PC-9 (cell line): ENCODE measurements at regions of chr20 and their contacts with region 1.

Region 1: GRCh38 chr20:8853805-8854338 is 215.0 kb upstream of the PLCB4 start:
- DNase-seq: peak; percentile 24 to 39
- H3K4me3 ChIP-seq: no peak overlapping the region
- H3K27ac ChIP-seq: no peak overlapping the region
- H3K4me1 ChIP-seq: no peaks in the 10 kb centered on the region
- H3K27me3 ChIP-seq: no peaks in the 10 kb centered on the region
- CTCF ChIP-seq: peak; percentile 92

Region 2: DNA sequence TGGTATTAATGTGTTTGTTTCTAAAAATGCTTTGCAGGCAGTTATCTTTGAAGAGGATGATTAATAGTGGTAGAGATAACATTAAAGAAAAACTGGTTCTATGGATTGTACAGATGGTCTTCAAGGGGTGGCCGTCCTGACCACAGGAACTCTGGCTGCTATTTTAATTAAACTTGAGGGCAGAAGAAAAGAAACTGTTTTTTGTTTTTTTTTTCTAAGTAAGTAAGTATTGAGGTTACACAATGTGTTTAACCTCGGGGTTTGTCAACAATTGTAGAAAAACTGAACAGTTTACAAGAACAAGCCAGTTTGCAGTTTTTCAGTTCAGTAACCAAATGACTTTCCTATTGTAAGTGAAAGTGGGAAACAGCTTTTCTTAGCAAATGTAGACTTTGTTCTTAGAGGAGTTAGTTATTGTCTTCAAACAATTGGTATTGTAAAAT is 644.9 kb before region 1 on chr20:
- CTCF ChIA-PET with region 1: no interaction called
- POLR2A ChIA-PET with region 1: no interaction called
- intact Hi-C with region 1: no loop called
- DNase-seq: peak in 1 of 2 experiments; percentile 49
- H3K4me3 ChIP-seq: no peak overlapping the region
- H3K27ac ChIP-seq: no peak overlapping the region
- H3K4me1 ChIP-seq: peaks cover 6% of the 10 kb centered on the region
- H3K27me3 ChIP-seq: no peaks in the 10 kb centered on the region
- CTCF ChIP-seq: no peak

Region 3: DNA sequence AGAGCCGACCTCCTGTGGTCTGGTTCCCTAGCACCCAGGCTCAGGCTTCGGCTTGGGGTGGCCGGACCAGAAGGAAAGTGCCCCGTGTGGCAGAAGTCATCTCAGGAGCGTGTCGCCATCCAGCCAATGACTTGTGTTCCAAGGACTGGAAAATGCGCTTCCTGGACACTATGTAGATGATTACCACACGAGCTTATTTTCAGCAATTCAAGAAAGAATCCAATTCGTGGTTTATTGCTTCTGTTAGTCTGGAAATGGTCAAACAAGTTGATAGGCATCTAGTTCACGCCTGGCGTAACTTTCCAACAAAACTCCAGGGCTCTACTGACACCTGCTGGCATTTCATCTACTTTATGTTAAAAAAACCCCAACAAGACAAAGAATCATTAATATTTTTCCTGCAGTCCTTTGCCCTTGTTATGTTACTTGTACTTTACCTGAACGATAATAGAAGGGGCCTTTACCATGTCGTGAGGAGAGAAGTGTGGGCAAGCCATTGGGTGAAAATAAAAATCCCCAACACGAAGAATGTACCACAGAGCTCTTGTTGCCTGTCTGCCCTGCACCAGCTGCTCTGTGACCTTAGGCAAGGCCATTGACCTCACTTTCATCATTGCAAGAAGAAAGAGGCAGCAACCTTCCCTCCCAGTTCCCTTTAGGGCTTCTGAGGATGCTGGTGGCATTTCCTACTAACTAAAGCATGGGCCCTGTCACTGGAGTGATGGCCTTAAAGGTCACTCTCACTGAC is 505.9 kb after region 1 on chr20:
- CTCF ChIA-PET with region 1: interaction called, 3 read pairs
- POLR2A ChIA-PET with region 1: no interaction called
- intact Hi-C with region 1: loop called (anchors 1 kb)
- DNase-seq: peak; percentile 37 to 39
- H3K4me3 ChIP-seq: no peak overlapping the region
- H3K27ac ChIP-seq: no peak overlapping the region
- H3K4me1 ChIP-seq: no peaks in the 10 kb centered on the region
- H3K27me3 ChIP-seq: no peaks in the 10 kb centered on the region
- CTCF ChIP-seq: peak; percentile 75

Region 4: GRCh38 chr20:9392892-9393857 is 539.3 kb after region 1 on chr20:
- CTCF ChIA-PET with region 1: interaction called, 9 read pairs
- POLR2A ChIA-PET with region 1: no interaction called
- intact Hi-C with region 1: loop called (anchors 1 kb)
- DNase-seq: peak in 1 of 2 experiments; percentile 54
- H3K4me3 ChIP-seq: no peak overlapping the region
- H3K27ac ChIP-seq: no peak overlapping the region
- H3K4me1 ChIP-seq: no peaks in the 10 kb centered on the region
- H3K27me3 ChIP-seq: no peaks in the 10 kb centered on the region
- CTCF ChIP-seq: peak; percentile 70